Gastrocnemius medialis (tissue), 4 donors: ENCODE measurements at regions of chr10 and their contacts with region 1.

Region 1: GRCh38 chr10:119028900-119029612 is 458 bp upstream of the NANOS1 start:
- DNase-seq: peak; percentile 74 to 86
- ATAC-seq: peak; percentile 51 to 57
- H3K4me3 ChIP-seq: peak overlapping the region; percentile 56 to 63 (median 58)
- H3K27ac ChIP-seq: peak overlapping the region; percentile 76 to 92 (median 80)
- H3K4me1 ChIP-seq: peaks cover 35 to 39% of the 10 kb centered on the region in 2 donors
- H3K27me3 ChIP-seq: no peaks in the 10 kb centered on the region
- CTCF ChIP-seq: peak in 3 of 5 experiments; percentile 35 to 58 (median 36)
- POLR2A ChIP-seq: peak; percentile 60

Region 2: GRCh38 chr10:118958984-118959916 is 69.8 kb before region 1 on chr10:
- in situ Hi-C with region 1: no loop called
- intact Hi-C with region 1: loop called (anchors 2 kb)
- DNase-seq: peak; percentile 74 to 84
- ATAC-seq: peak; percentile 91 to 96
- H3K4me3 ChIP-seq: no peak overlapping the region
- H3K27ac ChIP-seq: peak overlapping the region; percentile 49 to 82 (median 68)
- H3K4me1 ChIP-seq: peaks cover 17 to 28% of the 10 kb centered on the region in 2 donors
- H3K27me3 ChIP-seq: no peaks in the 10 kb centered on the region
- CTCF ChIP-seq: no peak
- POLR2A ChIP-seq: no peak

Region 3: DNA sequence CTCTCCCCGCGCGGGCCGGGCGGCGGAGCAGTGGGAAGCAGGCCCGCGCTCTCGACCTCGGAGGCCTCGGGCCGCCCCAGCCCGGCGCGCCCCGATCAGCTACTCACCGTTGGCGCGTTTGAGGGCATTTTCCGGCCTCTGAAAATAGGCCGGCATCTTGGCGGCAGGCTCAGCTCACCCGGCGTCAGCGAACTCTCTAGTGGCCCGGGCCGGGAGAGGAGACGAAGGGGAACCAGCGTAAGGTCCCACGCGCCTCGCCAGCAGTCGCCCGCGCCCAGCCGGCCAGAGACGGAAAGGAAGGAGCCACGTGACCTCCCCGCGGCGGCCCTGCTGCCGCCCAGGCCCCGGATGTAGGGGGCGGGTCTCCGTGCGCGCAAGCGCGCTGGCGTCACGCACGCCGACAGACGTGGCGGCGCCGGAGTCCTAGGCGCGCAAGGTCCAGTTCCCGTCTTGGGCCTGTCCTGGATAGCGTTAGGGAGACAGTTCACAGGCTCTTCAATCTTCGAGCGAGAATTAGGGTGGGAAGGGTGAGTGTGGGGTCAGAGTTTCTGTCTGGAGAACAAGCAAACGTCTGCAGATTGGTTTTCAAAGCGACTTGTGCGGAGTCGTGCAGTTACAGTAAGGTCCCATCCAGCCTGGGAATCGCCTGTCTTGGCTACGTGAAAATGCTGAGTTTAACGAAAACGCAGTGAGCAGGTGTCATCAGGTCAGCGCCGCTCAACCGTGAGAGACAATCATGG is 51.6 kb after region 1 on chr10 and contains the start of gene EIF3A:
- in situ Hi-C with region 1: no loop called
- intact Hi-C with region 1: loop called (anchors 2 kb)
- DNase-seq: peak; percentile 81 to 92
- ATAC-seq: peak; percentile 87 to 90
- H3K4me3 ChIP-seq: peak within 1 kb of the TSS; percentile 77 to 94 (median 92)
- H3K27ac ChIP-seq: peak within 1 kb of the TSS; percentile 95 to 99 (median 97)
- H3K4me1 ChIP-seq: peaks cover 30 to 32% of the 10 kb centered on the region in 2 donors
- H3K27me3 ChIP-seq: no peaks in the 10 kb centered on the region
- CTCF ChIP-seq: peak in 1 of 5 experiments; percentile 9
- POLR2A ChIP-seq: peak; percentile 96 to 97
- total RNA-seq, gene EIF3A: 136 to 240 (median 191) TPM

Region 4: DNA sequence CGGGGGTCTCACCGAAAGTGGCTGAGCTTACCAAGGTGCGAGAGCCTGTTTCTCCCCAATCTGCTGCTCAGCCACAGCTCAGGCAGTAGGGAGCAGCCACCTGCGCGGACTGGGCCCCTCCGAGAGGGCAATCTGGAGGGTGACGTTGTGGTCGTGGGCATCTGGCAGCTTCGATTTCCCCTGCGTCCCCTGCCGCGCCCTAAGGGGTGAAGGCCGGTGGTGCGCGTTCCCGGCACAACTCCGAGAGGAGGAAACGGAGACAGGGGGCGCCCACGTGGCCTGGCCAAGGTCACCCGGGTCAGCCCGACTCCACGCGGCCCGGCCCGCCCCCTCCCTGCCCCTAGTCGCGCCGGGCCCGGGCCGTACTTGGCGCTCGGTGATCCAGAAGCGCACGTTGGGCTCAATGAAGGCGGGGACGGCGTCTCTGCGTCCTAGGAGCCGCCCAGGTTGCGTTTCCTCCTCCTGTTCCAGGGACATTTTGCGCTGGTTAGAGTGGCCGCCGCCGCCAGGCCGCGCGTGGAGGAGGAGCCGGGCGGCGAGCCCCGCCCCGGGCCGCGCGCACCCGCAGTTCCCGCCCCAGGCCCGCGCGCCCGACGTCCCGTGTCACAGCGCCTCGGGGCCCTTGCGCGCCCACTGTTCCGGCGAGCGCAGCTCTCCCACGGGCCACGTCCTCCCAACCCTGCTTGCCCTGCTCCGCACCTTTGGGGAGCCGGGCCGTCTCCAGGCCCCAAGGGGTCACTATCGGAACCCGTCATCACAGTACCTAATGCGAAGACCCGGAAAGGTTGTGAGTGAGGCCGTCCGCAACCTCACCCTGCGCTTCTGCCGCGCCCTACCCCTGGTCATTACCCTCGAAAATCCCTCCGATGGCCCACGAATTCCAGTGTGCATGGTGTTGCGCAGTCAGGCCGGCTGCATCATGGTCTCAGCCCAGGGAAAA is 136.4 kb after region 1 on chr10 and contains the start of gene SFXN4:
- in situ Hi-C with region 1: no loop called
- intact Hi-C with region 1: loop called (anchors 5 kb)
- DNase-seq: peak; percentile 66 to 81
- ATAC-seq: peak; percentile 89 to 90
- H3K4me3 ChIP-seq: peak within 1 kb of the TSS; percentile 69 to 86 (median 78)
- H3K27ac ChIP-seq: peak within 1 kb of the TSS; percentile 90 to 97 (median 95)
- H3K4me1 ChIP-seq: peaks cover 21 to 29% of the 10 kb centered on the region in 2 donors
- H3K27me3 ChIP-seq: no peaks in the 10 kb centered on the region
- CTCF ChIP-seq: peak in 2 of 5 experiments; percentile 5 to 25
- POLR2A ChIP-seq: peak; percentile 78 to 83
- total RNA-seq, gene SFXN4: 25.6 to 69.7 (median 39.8) TPM